ENCODE measurements at regions of chrX and their contacts with region 1.

Region 1: GRCh38 chrX:119662958-119663357 is 30.0 kb downstream of the SEPTIN6 start:
- DNase-seq: no peak
- ATAC-seq: no peak
- H3K4me3 ChIP-seq: no peak overlapping the region
- H3K4me3 Mint-ChIP-seq: no peak overlapping the region
- H3K27ac ChIP-seq: no peak overlapping the region
- H3K27ac Mint-ChIP-seq: peak overlapping the region in 5 of 9 donors; percentile 14 to 89 (median 62)
- H3K4me1 ChIP-seq: peaks cover 0 to 8% of the 10 kb centered on the region in 2 donors
- H3K4me1 Mint-ChIP-seq: peaks cover 0 to 52% (median 30%) of the 10 kb centered on the region in 7 donors
- H3K27me3 ChIP-seq: no peaks in the 10 kb centered on the region
- H3K27me3 Mint-ChIP-seq: no peaks in the 10 kb centered on the region

Region 2: GRCh38 chrX:119676949-119677653 is 14.1 kb after region 1 on chrX:
- CTCF ChIA-PET with region 1: no interaction called
- POLR2A ChIA-PET with region 1: interaction called, 290 read pairs
- intact Hi-C with region 1: loop called in 1 of 2 experiments (anchors 2 kb)
- DNase-seq: no peak
- ATAC-seq: peak; percentile 12
- H3K4me3 ChIP-seq: peak overlapping the region; percentile 54
- H3K4me3 Mint-ChIP-seq: peak overlapping the region; percentile 80 to 98 (median 88)
- H3K27ac ChIP-seq: peak overlapping the region; percentile 73
- H3K27ac Mint-ChIP-seq: peak overlapping the region; percentile 90 to 98 (median 95)
- H3K4me1 ChIP-seq: peaks cover 43 to 59% of the 10 kb centered on the region in 2 donors
- H3K4me1 Mint-ChIP-seq: peaks cover 14 to 93% (median 52%) of the 10 kb centered on the region in 7 donors
- H3K27me3 ChIP-seq: no peaks in the 10 kb centered on the region
- H3K27me3 Mint-ChIP-seq: no peaks in the 10 kb centered on the region